CD4-positive, alpha-beta T cell (primary cell): ENCODE measurements at regions of chr19 and their contacts with region 1.

Region 1: GRCh38 chr19:45178262-45179071 is at the start of gene BLOC1S3:
- DNase-seq: peak; percentile 99 to 100 (median 100)
- ATAC-seq: peak; percentile 85
- H3K4me3 ChIP-seq: peak within 1 kb of the TSS; percentile 93
- H3K4me3 Mint-ChIP-seq: peak within 1 kb of the TSS; percentile 87
- H3K27ac ChIP-seq: peak within 1 kb of the TSS; percentile 86 to 91
- H3K27ac Mint-ChIP-seq: peak within 1 kb of the TSS; percentile 84
- H3K4me1 ChIP-seq: peaks cover 57% of the 10 kb centered on the region
- H3K4me1 Mint-ChIP-seq: peaks cover 42% of the 10 kb centered on the region
- H3K27me3 ChIP-seq: no peaks in the 10 kb centered on the region
- H3K27me3 Mint-ChIP-seq: no peaks in the 10 kb centered on the region
- CTCF ChIP-seq: peak; percentile 32
- total RNA-seq, gene BLOC1S3: 14.7 to 18.8 TPM

Region 2: DNA sequence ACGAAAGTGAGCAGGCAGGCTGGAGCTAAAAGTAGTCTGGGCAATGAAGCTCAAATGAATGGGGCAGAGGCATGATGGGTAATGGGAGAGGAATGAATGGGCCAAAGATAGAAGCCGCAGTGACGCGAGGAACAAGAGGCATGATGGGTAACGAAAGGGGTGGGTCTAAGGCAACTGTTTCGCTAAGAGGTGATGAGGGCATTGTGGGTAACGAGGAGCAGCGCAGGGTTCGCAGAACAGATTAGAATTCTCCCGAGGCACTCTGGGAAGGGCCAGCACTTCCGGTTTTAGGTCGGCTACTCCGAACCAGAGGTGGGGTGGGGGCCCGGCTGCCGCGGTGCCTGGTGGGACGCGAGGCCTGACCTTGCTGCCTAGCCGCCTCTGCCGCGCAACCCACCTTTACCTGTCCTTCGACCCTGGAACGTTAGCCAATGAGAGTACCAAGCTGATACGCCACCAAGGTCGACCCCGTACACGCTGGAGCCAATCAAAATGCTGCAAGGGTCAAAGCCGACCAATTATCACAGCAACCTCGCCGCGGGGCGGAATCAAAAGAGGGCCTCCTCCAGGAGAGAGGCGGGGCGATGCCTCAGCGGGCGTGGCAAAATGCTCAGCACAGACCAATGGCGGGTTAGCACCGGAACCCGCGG is 288.0 kb before region 1 on chr19:
- CTCF ChIA-PET with region 1: no interaction called
- POLR2A ChIA-PET with region 1: interaction called, 9 read pairs
- intact Hi-C with region 1: loop called (anchors 2 kb)
- DNase-seq: peak in 9 of 14 experiments; percentile 100
- ATAC-seq: peak; percentile 78
- H3K4me3 ChIP-seq: peak overlapping the region; percentile 63
- H3K4me3 Mint-ChIP-seq: peak overlapping the region; percentile 82
- H3K27ac ChIP-seq: peak overlapping the region; percentile 94 to 95
- H3K27ac Mint-ChIP-seq: peak overlapping the region; percentile 83
- H3K4me1 ChIP-seq: peaks cover 24% of the 10 kb centered on the region
- H3K4me1 Mint-ChIP-seq: peaks cover 25% of the 10 kb centered on the region
- H3K27me3 ChIP-seq: no peaks in the 10 kb centered on the region
- H3K27me3 Mint-ChIP-seq: no peaks in the 10 kb centered on the region
- CTCF ChIP-seq: no peak

Region 3: GRCh38 chr19:44988896-44989556 is 189.4 kb before region 1 on chr19:
- CTCF ChIA-PET with region 1: no interaction called
- POLR2A ChIA-PET with region 1: no interaction called
- intact Hi-C with region 1: no loop called
- DNase-seq: peak; percentile 46 to 83 (median 63)
- ATAC-seq: peak; percentile 90
- H3K4me3 ChIP-seq: no peak overlapping the region
- H3K4me3 Mint-ChIP-seq: no peak overlapping the region
- H3K27ac ChIP-seq: no peak overlapping the region
- H3K27ac Mint-ChIP-seq: no peak overlapping the region
- H3K4me1 ChIP-seq: no peaks in the 10 kb centered on the region
- H3K4me1 Mint-ChIP-seq: no peaks in the 10 kb centered on the region
- H3K27me3 ChIP-seq: no peaks in the 10 kb centered on the region
- H3K27me3 Mint-ChIP-seq: no peaks in the 10 kb centered on the region
- CTCF ChIP-seq: peak; percentile 48

Region 4: DNA sequence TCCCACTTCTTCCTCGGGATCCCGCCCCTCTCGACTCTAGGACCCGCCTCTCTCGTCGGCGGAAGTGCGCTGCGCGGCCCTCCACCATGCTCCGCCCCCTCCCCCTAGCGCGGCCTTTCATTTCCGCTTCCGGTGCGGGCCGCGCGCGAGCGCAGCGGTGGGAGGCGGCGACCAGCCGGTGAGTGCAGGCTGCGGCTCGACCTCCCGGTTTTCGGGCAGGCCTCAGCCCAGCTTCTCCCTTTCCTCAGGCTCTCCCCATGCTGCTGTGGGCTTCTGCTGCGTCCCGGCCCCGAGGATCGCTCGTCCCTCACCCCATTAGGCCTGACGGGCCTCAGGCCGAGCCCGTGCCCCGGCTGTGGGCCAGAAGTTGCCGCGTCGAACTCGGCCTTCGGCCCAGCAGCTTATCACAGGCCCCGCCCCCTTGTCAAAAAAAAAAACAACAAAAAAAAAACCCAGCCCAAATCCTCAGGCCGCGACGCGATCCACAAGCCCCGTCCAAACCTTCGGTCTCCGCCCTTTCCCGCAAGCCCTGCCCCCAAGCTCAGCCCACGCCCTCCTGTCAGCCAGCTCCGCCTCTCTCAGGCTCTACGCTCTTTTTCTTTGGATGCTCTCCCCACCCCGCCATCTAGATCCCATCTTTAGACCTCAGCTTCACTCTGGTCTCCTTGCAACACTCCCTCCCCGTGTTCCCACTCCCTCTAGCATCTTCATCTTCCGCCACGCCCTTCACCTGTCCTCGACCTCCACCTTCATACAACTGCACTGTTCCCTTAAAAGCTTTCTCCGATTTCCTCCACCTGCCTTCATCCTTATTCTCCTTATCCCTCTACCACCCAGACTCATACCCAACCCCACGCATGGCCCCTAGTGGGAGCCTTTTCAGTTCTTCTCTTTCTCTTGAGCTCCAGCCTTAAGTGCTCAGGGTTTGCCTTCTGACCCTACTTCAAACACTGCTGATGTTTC is 139.3 kb before region 1 on chr19 and contains the start of gene CLASRP:
- CTCF ChIA-PET with region 1: no interaction called
- POLR2A ChIA-PET with region 1: interaction called, 9 read pairs
- intact Hi-C with region 1: loop called in 1 of 2 experiments (anchors 2 kb)
- DNase-seq: peak; percentile 78 to 95 (median 85)
- ATAC-seq: peak; percentile 87
- H3K4me3 ChIP-seq: peak within 1 kb of the TSS; percentile 98
- H3K4me3 Mint-ChIP-seq: peak within 1 kb of the TSS; percentile 99
- H3K27ac ChIP-seq: peak within 1 kb of the TSS; percentile 91 to 99
- H3K27ac Mint-ChIP-seq: peak within 1 kb of the TSS; percentile 96
- H3K4me1 ChIP-seq: peaks cover 46% of the 10 kb centered on the region
- H3K4me1 Mint-ChIP-seq: peaks cover 34% of the 10 kb centered on the region
- H3K27me3 ChIP-seq: no peaks in the 10 kb centered on the region
- H3K27me3 Mint-ChIP-seq: no peaks in the 10 kb centered on the region
- CTCF ChIP-seq: no peak
- total RNA-seq, gene CLASRP: 152 to 154 TPM

Region 5: DNA sequence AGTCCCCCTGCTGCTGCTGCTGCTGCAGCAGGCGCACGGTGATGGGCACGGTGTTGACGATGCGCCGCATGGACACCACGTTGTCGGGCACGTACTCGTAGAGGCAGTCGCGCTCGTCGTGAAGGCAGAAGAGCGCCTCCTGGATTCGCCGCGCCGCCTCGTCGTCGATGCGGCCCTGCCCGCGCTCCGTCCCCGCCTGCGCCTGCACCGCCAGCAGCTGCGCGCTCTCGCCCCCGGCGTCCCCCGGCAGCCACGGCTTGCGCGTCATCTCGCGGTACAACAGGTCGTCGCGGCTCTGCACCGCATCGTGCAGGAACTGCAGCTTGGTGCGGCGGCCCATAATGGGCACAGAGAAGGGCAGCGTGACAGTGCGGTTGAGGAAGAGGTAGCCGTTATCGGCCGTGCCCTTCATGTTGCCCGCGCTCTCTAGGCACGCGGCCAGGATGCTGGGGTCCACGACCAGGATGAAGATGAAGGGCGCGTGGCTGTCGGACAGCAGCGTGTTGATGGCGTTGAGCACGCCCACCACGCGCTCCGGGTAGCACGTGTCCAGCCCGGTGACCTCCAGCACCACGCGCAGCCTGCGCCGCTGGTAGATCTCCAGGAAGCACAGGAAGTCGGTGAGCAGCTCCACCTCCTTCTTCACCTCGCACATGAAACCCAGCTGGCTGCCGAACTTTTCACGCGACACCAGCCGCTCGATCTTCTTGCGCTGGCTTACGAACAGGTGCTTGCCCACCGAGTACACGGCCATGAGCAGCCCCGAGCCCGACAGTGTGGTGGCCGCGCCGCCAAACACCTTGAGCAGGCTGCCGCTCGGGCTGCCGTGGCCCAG is 25.7 kb before region 1 on chr19:
- CTCF ChIA-PET with region 1: no interaction called
- POLR2A ChIA-PET with region 1: interaction called, 39 read pairs
- intact Hi-C with region 1: no loop called
- DNase-seq: peak; percentile 19 to 77 (median 34)
- ATAC-seq: peak; percentile 70
- H3K4me3 ChIP-seq: peak overlapping the region; percentile 50
- H3K4me3 Mint-ChIP-seq: peak overlapping the region; percentile 76
- H3K27ac ChIP-seq: no peak overlapping the region
- H3K27ac Mint-ChIP-seq: peak overlapping the region; percentile 65
- H3K4me1 ChIP-seq: peaks cover 38% of the 10 kb centered on the region
- H3K4me1 Mint-ChIP-seq: peaks cover 21% of the 10 kb centered on the region
- H3K27me3 ChIP-seq: peaks cover 0 to 6% of the 10 kb centered on the region in 2 experiments
- H3K27me3 Mint-ChIP-seq: peaks cover 28% of the 10 kb centered on the region
- CTCF ChIP-seq: no peak

Region 6: DNA sequence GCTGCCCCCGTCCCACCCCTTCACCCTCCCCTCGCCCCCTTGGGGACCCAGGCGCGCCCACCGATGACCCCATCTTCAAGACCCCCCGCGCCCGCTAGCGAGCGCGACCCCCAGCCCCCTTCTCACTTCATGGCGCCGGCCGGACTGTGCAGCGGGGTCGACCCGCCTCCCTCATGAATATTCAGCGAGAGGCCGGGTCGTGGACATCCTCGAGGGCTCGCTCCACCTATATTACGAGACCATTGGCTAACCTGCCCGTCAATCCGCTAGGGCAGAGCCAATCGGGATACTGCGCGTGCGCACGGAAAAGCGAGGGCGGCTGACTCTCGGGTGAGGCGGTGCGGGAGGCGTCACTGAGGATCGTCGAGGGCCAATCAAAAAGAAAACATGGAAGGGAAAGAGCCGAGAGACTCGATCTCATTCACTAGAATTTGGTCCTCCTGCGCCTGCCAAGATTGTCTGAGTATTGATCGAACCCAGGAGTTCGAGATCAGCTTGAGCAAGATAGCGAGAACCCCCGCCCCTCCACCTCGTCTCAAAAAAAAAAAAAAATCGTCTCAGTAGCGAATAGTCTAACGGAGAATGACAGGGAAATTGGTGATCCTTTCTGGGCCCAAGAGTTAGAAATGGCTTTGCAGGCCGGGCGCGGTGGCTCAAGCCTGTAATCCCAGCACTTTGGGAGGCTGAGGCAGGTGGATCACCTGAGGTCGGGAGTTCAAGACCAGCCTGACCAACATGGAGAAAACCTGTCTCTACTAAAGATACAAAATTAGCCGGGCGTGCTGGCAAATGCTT is 192.1 kb after region 1 on chr19 and contains the start of gene ERCC2:
- CTCF ChIA-PET with region 1: no interaction called
- POLR2A ChIA-PET with region 1: no interaction called
- intact Hi-C with region 1: loop called in 1 of 2 experiments (anchors 1 kb)
- DNase-seq: peak; percentile 99 to 100 (median 99)
- ATAC-seq: peak; percentile 99
- H3K4me3 ChIP-seq: peak within 1 kb of the TSS; percentile 92
- H3K4me3 Mint-ChIP-seq: peak within 1 kb of the TSS; percentile 88
- H3K27ac ChIP-seq: peak within 1 kb of the TSS in 1 of 2 donors; percentile 78
- H3K27ac Mint-ChIP-seq: peak within 1 kb of the TSS; percentile 88
- H3K4me1 ChIP-seq: peaks cover 26% of the 10 kb centered on the region
- H3K4me1 Mint-ChIP-seq: peaks cover 7% of the 10 kb centered on the region
- H3K27me3 ChIP-seq: no peaks in the 10 kb centered on the region
- H3K27me3 Mint-ChIP-seq: no peaks in the 10 kb centered on the region
- CTCF ChIP-seq: no peak
- total RNA-seq, gene ERCC2: 8.7 to 9.6 TPM

Region 7: GRCh38 chr19:45902651-45903625 is 724.5 kb after region 1 on chr19:
- CTCF ChIA-PET with region 1: no interaction called
- POLR2A ChIA-PET with region 1: no interaction called
- intact Hi-C with region 1: loop called (anchors 2 to 10 kb)
- DNase-seq: peak; percentile 97 to 100 (median 99)
- ATAC-seq: peak; percentile 81
- H3K4me3 ChIP-seq: peak overlapping the region; percentile 64
- H3K4me3 Mint-ChIP-seq: peak overlapping the region; percentile 95
- H3K27ac ChIP-seq: peak overlapping the region; percentile 68 to 85
- H3K27ac Mint-ChIP-seq: peak overlapping the region; percentile 89
- H3K4me1 ChIP-seq: peaks cover 26% of the 10 kb centered on the region
- H3K4me1 Mint-ChIP-seq: peaks cover 28% of the 10 kb centered on the region
- H3K27me3 ChIP-seq: no peaks in the 10 kb centered on the region
- H3K27me3 Mint-ChIP-seq: no peaks in the 10 kb centered on the region
- CTCF ChIP-seq: no peak